Adrenal gland (tissue), 19 donors: ENCODE measurements at regions of chr19 and their contacts with region 1.

Region 1: DNA sequence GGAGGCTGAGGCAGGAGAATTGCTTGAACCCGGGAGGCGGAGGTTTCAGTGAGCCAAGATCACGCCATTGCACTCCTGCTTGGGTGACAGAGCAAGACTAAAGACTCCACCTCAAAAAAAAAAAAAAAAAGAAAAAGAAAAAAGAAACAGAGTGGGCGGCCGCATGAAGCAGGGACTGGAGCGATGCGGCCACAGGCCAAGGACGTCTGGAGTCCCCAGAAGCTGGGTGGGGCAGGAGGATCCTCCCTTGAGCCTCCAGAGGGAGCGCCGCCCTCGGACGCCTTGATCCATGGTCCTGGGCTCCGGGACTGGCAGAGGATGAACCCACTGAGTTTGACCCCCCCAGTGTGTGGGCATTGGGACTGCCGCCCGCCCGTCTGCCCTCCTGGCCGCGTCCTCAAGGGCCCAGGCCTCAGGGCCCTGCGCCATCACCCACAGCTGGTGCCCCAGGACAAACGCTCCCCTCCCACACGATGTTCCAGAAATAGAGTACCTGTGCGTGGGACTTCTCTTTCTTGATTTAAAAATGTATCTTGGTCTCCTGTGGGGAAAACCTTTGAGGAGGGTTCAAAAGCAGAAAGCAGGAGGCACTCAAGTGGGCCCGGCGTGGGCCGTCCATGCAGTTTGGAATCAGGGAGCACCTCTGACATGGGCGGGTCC is 15.5 kb downstream of the BTBD2 start:
- DNase-seq: no peak
- H3K4me3 ChIP-seq: no peak overlapping the region
- H3K27ac ChIP-seq: no peak overlapping the region
- H3K4me1 ChIP-seq: no peaks in the 10 kb centered on the region
- H3K27me3 ChIP-seq: no peaks in the 10 kb centered on the region
- CTCF ChIP-seq: no peak
- POLR2A ChIP-seq: no peak

Region 2: GRCh38 chr19:1956868-1957492 is 43.0 kb before region 1 on chr19:
- intact Hi-C with region 1: loop called in 1 of 2 experiments (anchors 10 kb)
- DNase-seq: peak; percentile 68 to 92 (median 83)
- H3K4me3 ChIP-seq: no peak overlapping the region
- H3K27ac ChIP-seq: peak overlapping the region in 1 of 5 donors; percentile 22
- H3K4me1 ChIP-seq: peaks cover 4 to 9% of the 10 kb centered on the region in 2 donors
- H3K27me3 ChIP-seq: no peaks in the 10 kb centered on the region
- CTCF ChIP-seq: no peak
- POLR2A ChIP-seq: peak in 1 of 2 donors; percentile 18